ENCODE measurements at regions of chr13 and their contacts with region 1.

Region 1: GRCh38 chr13:72253754-72254153 is 386.8 kb upstream of the DACH1 start:
- DNase-seq: no peak
- ATAC-seq: no peak
- H3K4me3 ChIP-seq: no peak overlapping the region
- H3K27ac ChIP-seq: no peak overlapping the region
- H3K4me1 ChIP-seq: no peaks in the 10 kb centered on the region
- H3K27me3 ChIP-seq: no peaks in the 10 kb centered on the region
- CTCF ChIP-seq: no peak
- POLR2A ChIP-seq: no peak
- RAD21 ChIP-seq: no peak

Region 2: DNA sequence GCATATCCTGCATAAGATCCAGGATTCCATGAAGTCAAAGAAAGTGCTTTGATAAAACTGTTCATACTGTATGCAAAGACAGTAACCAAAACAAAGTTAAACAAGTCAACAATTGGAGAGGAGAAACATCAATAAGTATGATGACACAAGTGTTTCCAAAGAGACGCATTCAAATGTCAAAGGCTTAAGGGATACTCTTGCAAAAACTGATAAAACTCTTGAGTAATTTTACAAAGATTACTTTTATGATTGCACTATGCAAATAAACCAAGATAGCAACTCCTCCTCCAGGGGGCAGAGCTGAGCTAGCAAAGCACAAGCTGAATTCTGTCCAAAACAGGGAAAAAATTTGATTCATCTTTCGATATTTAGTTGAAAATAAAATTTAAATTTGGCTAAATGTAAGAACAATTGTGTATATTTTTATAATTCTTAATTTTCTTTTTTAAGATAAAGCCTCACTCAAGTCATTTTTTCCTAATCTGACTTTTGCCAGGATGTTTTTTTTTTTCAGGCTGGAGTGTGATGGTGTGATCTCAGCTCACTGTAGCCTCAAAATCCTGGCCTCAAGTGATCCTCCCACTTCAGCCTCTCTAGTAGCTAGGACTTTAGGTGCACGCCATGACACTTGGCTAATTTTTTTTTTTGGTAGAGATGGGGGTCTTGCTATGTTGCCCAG is 389.7 kb after region 1 on chr13:
- CTCF ChIA-PET with region 1: interaction called, 12 read pairs
- POLR2A ChIA-PET with region 1: no interaction called
- dilution Hi-C with region 1: no loop called
- in situ Hi-C with region 1: no loop called
- intact Hi-C with region 1: no loop called
- DNase-seq: peak; percentile 44
- ATAC-seq: peak; percentile 60
- H3K4me3 ChIP-seq: no peak overlapping the region
- H3K27ac ChIP-seq: no peak overlapping the region
- H3K4me1 ChIP-seq: no peaks in the 10 kb centered on the region
- H3K27me3 ChIP-seq: no peaks in the 10 kb centered on the region; the same call in 1 of the 2 replicates
- CTCF ChIP-seq: peak; percentile 72
- POLR2A ChIP-seq: no peak
- RAD21 ChIP-seq: peak; percentile 47